ENCODE measurements at regions of chr15 and their contacts with region 1.

Region 1: DNA sequence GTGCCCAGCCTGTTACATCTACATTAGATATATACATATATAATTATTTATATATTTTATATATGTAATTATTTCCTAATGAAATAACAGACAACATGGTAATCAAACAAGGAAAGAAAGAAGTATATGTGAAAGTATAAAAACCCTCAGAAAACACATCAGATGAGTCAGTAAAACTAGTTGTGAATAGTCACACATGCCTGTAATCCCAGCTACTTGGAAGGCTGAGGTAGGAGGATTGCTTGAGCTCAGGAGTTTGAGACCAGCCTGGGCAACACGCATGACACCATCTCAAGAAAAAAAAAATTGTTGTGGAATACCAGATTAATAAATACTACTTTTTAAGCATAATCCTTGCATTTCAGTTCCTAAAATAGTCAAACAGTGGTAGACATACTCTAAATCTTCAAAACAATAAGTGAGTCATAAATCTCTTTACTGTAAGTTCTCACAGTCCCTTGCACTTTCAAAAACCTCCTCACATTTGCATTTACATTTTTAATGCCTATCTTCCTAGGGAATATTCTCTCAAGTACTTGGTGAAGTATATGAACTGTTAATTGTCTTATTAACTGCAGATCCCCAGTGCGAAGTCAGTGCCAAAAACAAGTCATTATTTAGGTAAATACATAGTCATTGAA is 106.5 kb downstream of the MYO9A start:
- DNase-seq: no peak
- H3K4me3 ChIP-seq: no peak overlapping the region
- H3K4me3 Mint-ChIP-seq: no peak overlapping the region
- H3K27ac Mint-ChIP-seq: no peak overlapping the region
- H3K4me1 ChIP-seq: peaks cover 49% of the 10 kb centered on the region
- H3K4me1 Mint-ChIP-seq: peaks cover 13% of the 10 kb centered on the region
- H3K27me3 ChIP-seq: no peaks in the 10 kb centered on the region
- H3K27me3 Mint-ChIP-seq: no peaks in the 10 kb centered on the region
- CTCF ChIP-seq: no peak

Region 2: DNA sequence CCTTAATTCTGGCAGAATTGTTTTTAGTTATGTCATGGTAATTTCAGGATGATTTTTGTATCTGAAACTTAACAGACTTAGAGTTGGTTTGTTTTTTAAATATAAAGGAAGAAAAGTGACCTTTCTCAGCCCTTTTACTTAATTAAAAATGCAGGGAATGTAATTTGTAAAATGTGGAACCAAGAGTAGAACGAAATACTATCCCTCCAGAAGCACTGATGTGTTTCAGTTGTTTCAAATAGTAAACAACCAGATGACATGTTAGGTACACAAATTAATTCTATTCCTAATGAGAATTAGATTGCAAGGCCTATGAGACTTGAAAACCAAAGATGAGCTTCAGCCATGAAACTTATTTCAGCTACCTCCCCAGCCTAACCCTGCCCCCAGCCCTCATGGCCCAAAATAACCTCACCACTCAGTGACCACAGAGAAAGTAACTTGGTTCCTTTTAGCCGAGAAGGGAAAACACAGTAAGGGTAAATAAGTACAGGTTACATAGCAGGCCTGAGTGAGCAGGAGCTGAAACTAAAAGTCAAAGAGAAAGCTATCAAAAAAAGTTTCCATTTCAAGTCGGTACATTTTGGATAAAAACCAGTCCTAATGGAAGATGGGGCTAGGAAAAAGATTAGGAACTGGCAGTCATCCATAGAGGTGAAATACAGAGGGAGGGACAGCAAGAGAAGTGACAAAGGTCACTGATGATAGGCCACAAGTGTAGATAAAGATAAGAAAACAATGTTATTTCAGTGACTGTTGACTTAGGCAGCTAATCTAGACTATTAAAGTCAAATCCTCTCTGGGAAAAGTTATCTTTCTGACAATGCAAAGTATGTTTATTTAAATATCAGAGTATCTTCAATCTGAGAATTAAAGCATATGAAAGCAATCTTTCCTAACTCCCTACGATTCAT is 130.0 kb after region 1 on chr15:
- CTCF ChIA-PET with region 1: no interaction called
- POLR2A ChIA-PET with region 1: no interaction called
- intact Hi-C with region 1: loop called (anchors 5 kb)
- DNase-seq: peak in 1 of 2 experiments; percentile 58
- H3K4me3 ChIP-seq: no peak overlapping the region
- H3K4me3 Mint-ChIP-seq: peak overlapping the region; percentile 51
- H3K27ac Mint-ChIP-seq: peak overlapping the region; percentile 34
- H3K4me1 ChIP-seq: peaks cover 33% of the 10 kb centered on the region
- H3K4me1 Mint-ChIP-seq: peaks cover 21% of the 10 kb centered on the region
- H3K27me3 ChIP-seq: no peaks in the 10 kb centered on the region
- H3K27me3 Mint-ChIP-seq: no peaks in the 10 kb centered on the region
- CTCF ChIP-seq: no peak